Keratinocyte (primary cell): ENCODE measurements at regions of chr15 and their contacts with region 1.

Region 1: GRCh38 chr15:32994810-32995424 is 199.6 kb downstream of the FMN1 start:
- DNase-seq: no peak
- H3K4me3 ChIP-seq: no peak overlapping the region
- H3K27ac ChIP-seq: no peak overlapping the region
- H3K4me1 ChIP-seq: no peaks in the 10 kb centered on the region
- H3K27me3 ChIP-seq: no peaks in the 10 kb centered on the region
- CTCF ChIP-seq: peak in 1 of 3 experiments; percentile 21

Region 2: DNA sequence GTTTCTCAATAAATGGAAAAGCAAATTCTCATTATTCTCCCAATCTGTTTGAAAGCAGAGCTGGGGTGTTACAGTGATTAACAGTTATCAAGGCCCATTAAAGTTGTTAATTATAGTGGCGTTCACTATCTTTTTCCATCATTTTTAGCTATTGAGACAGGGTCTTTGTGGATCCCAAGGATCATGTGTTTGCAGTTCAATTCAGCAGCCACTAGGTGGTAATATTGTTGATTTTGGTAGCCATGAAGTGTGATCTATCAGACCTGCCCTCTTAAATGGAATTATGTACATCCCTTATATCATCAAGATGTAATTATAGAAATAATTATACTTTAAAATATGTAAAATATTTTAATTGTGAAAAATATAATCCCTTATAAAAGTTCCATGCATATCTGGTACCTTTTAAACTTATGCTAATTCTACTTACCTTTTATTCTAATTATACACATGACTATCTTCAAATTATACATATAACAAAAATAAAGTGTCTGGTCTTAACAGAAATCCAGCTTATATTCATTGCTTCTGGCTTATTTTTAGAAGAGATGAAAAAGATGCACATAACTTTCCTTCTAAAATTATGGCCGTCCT is 150.7 kb before region 1 on chr15:
- dilution Hi-C with region 1: loop called (anchors 25 kb)
- DNase-seq: peak; percentile 9
- H3K4me3 ChIP-seq: no peak overlapping the region
- H3K27ac ChIP-seq: no peak overlapping the region
- H3K4me1 ChIP-seq: no peaks in the 10 kb centered on the region
- H3K27me3 ChIP-seq: peaks cover 5% of the 10 kb centered on the region
- CTCF ChIP-seq: peak; percentile 46 to 70 (median 51)

Region 3: GRCh38 chr15:32861761-32862160 is 133.2 kb before region 1 on chr15:
- dilution Hi-C with region 1: no loop called
- DNase-seq: no peak
- H3K4me3 ChIP-seq: peak overlapping the region in 2 of 3 experiments; percentile 32 to 43
- H3K27ac ChIP-seq: no peak overlapping the region
- H3K4me1 ChIP-seq: peaks cover 24% of the 10 kb centered on the region
- H3K27me3 ChIP-seq: no peaks in the 10 kb centered on the region
- CTCF ChIP-seq: no peak